Activated T-helper 1 cell treated with anti-CD3 and anti-CD28 coated beads, Interleukin-12 subunit alpha, Interleukin-12 subunit beta, Interleukin-2, Interleukin-4 antibody, amounts not matched to agents 30 ng/mL and 10 ng/mL and 1 ng/mL, durations not matched to agents 14 hours and 24 hours and 36 hours (primary cell): ENCODE measurements at regions of chr1 and their contacts with region 1.

Region 1: GRCh38 chr1:234842726-234843641 is 233.0 kb upstream of the IRF2BP2 start:
- DNase-seq: peak; percentile 67
- H3K4me3 Mint-ChIP-seq: peak overlapping the region; percentile 54
- H3K27ac Mint-ChIP-seq: peak overlapping the region; percentile 90
- H3K4me1 Mint-ChIP-seq: peaks cover 96% of the 10 kb centered on the region
- H3K27me3 Mint-ChIP-seq: peaks cover 3% of the 10 kb centered on the region

Region 2: GRCh38 chr1:234722904-234723720 is 119.9 kb before region 1 on chr1:
- intact Hi-C with region 1: loop called (anchors 1 kb)
- DNase-seq: peak; percentile 7
- H3K4me3 Mint-ChIP-seq: peak overlapping the region; percentile 70
- H3K27ac Mint-ChIP-seq: peak overlapping the region; percentile 97
- H3K4me1 Mint-ChIP-seq: peaks cover 79% of the 10 kb centered on the region
- H3K27me3 Mint-ChIP-seq: peaks cover 5% of the 10 kb centered on the region

Region 3: DNA sequence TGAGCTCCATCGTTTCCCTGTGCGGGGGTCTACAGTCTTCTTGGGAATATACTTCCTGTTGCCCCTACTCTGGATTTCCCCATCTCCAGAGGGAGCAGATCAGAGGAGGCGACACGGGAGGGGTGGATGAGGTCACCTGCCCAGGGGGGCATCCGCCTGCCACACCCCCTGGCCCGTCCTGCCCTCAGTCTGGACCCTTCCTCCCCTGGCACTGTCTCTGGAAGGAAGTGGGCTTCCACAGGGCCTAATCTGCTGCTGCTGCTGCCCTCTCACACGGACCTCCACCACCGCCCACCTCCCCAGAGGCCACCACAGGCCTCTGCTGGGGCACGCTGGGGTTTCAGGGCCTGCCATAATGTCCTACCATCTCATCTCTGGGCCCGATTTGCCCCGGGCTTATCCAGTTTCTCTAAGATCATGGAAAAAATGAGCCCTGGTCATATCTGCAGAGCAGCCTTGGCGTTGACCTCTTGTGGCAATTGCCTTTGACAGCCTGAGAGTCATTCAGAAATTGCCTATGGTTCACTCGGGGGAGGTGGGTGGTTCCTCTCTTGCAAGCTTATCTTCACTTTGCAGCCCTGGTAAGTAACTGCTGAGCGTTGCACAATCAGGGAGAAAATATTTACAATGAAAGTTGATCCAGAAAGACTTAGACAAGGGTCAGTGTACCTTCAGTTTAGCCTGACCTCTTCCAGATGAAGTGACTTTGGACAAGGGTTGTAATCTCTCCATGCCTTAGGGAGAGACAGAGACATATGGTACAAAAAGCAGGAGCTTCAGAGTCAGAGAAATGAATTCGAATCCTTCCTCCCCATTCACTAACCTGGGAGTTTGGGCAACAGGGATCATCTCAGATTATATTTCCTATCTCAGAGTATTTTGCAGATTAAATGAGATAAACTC is 33.2 kb after region 1 on chr1:
- intact Hi-C with region 1: loop called (anchors 1 kb)
- DNase-seq: no peak
- H3K4me3 Mint-ChIP-seq: peak overlapping the region; percentile 11
- H3K27ac Mint-ChIP-seq: peak overlapping the region; percentile 88
- H3K4me1 Mint-ChIP-seq: peaks cover 55% of the 10 kb centered on the region
- H3K27me3 Mint-ChIP-seq: no peaks in the 10 kb centered on the region

Region 4: GRCh38 chr1:234925440-234926263 is 82.7 kb after region 1 on chr1:
- intact Hi-C with region 1: loop called (anchors 1 kb)
- DNase-seq: peak; percentile 17
- H3K4me3 Mint-ChIP-seq: peak overlapping the region; percentile 74
- H3K27ac Mint-ChIP-seq: peak overlapping the region; percentile 97
- H3K4me1 Mint-ChIP-seq: peaks cover 64% of the 10 kb centered on the region
- H3K27me3 Mint-ChIP-seq: no peaks in the 10 kb centered on the region

Region 5: GRCh38 chr1:234987415-234988154 is 144.6 kb after region 1 on chr1:
- intact Hi-C with region 1: loop called (anchors 1 kb)
- DNase-seq: no peak
- H3K4me3 Mint-ChIP-seq: peak overlapping the region; percentile 53
- H3K27ac Mint-ChIP-seq: peak overlapping the region; percentile 95
- H3K4me1 Mint-ChIP-seq: peaks cover 83% of the 10 kb centered on the region
- H3K27me3 Mint-ChIP-seq: no peaks in the 10 kb centered on the region